ENCODE measurements at regions of chr1 and their contacts with region 1.

Region 1: GRCh38 chr1:28329395-28330153 is 734 bp downstream of the MED18 start:
- DNase-seq: peak in 10 of 14 experiments; percentile 17 to 73 (median 36)
- ATAC-seq: peak; percentile 21
- H3K4me3 ChIP-seq: peak overlapping the region; percentile 67
- H3K4me3 Mint-ChIP-seq: peak overlapping the region; percentile 94
- H3K27ac ChIP-seq: peak overlapping the region; percentile 90 to 93
- H3K27ac Mint-ChIP-seq: peak overlapping the region; percentile 88
- H3K4me1 ChIP-seq: peaks cover 25% of the 10 kb centered on the region
- H3K4me1 Mint-ChIP-seq: peaks cover 35% of the 10 kb centered on the region
- H3K27me3 ChIP-seq: no peaks in the 10 kb centered on the region
- H3K27me3 Mint-ChIP-seq: no peaks in the 10 kb centered on the region
- CTCF ChIP-seq: no peak

Region 2: DNA sequence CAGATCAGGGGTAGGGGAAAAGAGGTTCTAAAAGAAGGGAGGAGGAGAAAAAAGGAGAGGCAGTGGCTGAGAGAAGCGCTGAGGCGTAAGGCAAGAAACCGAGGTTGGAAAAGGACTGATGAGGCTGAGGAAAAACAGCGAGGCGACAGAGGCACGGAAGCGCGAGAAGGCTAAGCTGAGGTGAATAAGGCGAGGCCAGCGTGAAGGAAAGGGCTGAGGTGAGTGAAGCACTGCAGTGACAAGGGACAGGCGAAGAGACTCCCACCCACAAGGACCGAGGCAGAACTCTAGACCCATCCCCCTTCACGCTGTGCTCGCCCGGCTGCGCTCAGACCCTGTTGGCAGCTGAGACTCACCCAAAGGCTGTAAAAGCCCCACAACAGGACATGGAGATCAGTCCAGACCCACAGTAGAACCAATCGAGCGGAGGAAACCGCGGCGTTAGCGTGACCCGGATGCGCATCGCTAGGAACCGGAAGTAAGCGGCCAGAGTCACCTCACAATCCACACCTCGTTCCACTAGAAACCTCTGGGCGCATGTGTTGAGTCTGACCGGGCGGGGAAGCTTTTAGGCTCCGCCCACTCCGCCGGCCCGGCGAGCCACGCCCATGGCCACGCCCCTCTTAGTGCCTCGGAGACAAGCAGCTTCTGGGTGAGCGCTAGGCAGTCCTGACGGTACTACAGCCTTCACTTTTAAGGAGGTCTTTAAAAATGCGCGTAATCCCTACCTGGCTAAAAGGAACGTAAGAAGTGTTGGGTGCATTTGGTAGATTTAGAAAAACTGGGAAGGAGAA is 241.2 kb before region 1 on chr1 and contains the start of gene EYA3:
- CTCF ChIA-PET with region 1: no interaction called
- POLR2A ChIA-PET with region 1: interaction called, 7 read pairs
- intact Hi-C with region 1: loop called in 1 of 2 experiments (anchors 5 kb)
- DNase-seq: peak; percentile 97 to 100 (median 99)
- ATAC-seq: peak; percentile 92
- H3K4me3 ChIP-seq: peak within 1 kb of the TSS; percentile 81
- H3K4me3 Mint-ChIP-seq: peak within 1 kb of the TSS; percentile 97
- H3K27ac ChIP-seq: peak within 1 kb of the TSS; percentile 69 to 86
- H3K27ac Mint-ChIP-seq: peak within 1 kb of the TSS; percentile 79
- H3K4me1 ChIP-seq: peaks cover 22% of the 10 kb centered on the region
- H3K4me1 Mint-ChIP-seq: peaks cover 42% of the 10 kb centered on the region
- H3K27me3 ChIP-seq: no peaks in the 10 kb centered on the region
- H3K27me3 Mint-ChIP-seq: no peaks in the 10 kb centered on the region
- CTCF ChIP-seq: no peak
- total RNA-seq, gene EYA3: 5.7 to 6.4 TPM

Region 3: GRCh38 chr1:28259307-28260167 is 70.0 kb before region 1 on chr1 and contains the start of gene SESN2:
- CTCF ChIA-PET with region 1: interaction called, 3 read pairs
- POLR2A ChIA-PET with region 1: interaction called, 49 read pairs
- intact Hi-C with region 1: loop called in 1 of 2 experiments (anchors 2 kb)
- DNase-seq: peak; percentile 98 to 99 (median 99)
- ATAC-seq: peak; percentile 98
- H3K4me3 ChIP-seq: peak within 1 kb of the TSS; percentile 98
- H3K4me3 Mint-ChIP-seq: peak within 1 kb of the TSS; percentile 91
- H3K27ac ChIP-seq: peak within 1 kb of the TSS; percentile 29 to 54
- H3K27ac Mint-ChIP-seq: peak within 1 kb of the TSS; percentile 76
- H3K4me1 ChIP-seq: peaks cover 72% of the 10 kb centered on the region
- H3K4me1 Mint-ChIP-seq: peaks cover 46% of the 10 kb centered on the region
- H3K27me3 ChIP-seq: no peaks in the 10 kb centered on the region
- H3K27me3 Mint-ChIP-seq: no peaks in the 10 kb centered on the region
- CTCF ChIP-seq: no peak
- total RNA-seq, gene SESN2: 8.8 to 9.6 TPM

Region 4: DNA sequence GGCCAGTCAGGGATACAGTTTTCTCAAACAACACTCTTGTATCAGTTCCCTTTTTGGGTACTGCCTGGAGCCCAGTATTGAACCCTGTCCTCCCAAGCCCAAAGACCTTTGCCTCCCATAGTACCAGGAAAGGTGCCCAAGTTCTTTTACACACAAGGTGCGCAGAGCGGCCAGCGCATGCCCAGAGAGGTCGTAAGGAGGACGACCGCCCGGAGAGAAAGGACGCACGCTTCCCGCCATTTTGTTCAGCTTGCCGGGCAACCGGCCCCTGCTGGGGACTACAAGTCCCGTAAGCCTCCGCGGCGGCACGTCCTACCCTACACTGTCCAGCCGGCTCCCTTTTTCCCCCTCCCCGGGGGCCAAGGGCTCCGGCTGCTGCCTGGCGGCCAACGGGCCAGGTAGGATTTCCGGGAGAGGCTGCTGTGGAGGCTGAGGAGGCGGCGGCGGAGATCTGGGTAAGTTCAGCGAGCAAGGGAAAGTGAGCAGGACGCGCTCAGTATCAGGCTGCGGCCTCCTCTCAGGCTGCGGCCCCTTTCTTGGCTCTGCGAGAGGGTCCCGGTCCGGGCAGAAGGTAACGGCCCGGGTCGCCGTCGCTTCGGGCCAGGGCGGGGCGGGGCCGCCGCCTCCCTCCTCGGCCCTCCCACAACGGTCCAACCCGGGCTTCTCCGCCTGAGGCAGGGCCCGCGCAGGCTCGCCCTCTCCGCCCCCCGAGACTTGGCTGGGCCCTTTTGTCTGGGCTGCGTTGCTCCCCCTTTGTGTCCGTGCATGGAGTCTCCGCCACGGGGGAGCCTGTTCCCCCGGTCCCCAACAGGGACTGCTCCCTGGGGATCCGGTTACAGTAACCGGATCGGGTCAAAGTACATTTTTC is 40.0 kb after region 1 on chr1 and contains the start of gene PHACTR4:
- CTCF ChIA-PET with region 1: no interaction called
- POLR2A ChIA-PET with region 1: interaction called, 24 read pairs
- intact Hi-C with region 1: loop called in 1 of 2 experiments (anchors 2 kb)
- DNase-seq: peak; percentile 53 to 90 (median 68)
- ATAC-seq: peak; percentile 88
- H3K4me3 ChIP-seq: peak within 1 kb of the TSS; percentile 97
- H3K4me3 Mint-ChIP-seq: peak within 1 kb of the TSS; percentile 94
- H3K27ac ChIP-seq: peak within 1 kb of the TSS; percentile 69 to 81
- H3K27ac Mint-ChIP-seq: peak within 1 kb of the TSS; percentile 84
- H3K4me1 ChIP-seq: peaks cover 25% of the 10 kb centered on the region
- H3K4me1 Mint-ChIP-seq: peaks cover 35% of the 10 kb centered on the region
- H3K27me3 ChIP-seq: no peaks in the 10 kb centered on the region
- H3K27me3 Mint-ChIP-seq: no peaks in the 10 kb centered on the region
- CTCF ChIP-seq: no peak
- total RNA-seq, gene PHACTR4: 26.0 to 26.3 TPM

Region 5: GRCh38 chr1:28581536-28582247 is 252.1 kb after region 1 on chr1:
- CTCF ChIA-PET with region 1: no interaction called
- POLR2A ChIA-PET with region 1: interaction called, 26 read pairs
- intact Hi-C with region 1: no loop called
- DNase-seq: peak; percentile 85 to 97 (median 92)
- ATAC-seq: peak; percentile 83
- H3K4me3 ChIP-seq: peak overlapping the region; percentile 93
- H3K4me3 Mint-ChIP-seq: peak overlapping the region; percentile 94
- H3K27ac ChIP-seq: peak overlapping the region; percentile 70 to 83
- H3K27ac Mint-ChIP-seq: peak overlapping the region; percentile 81
- H3K4me1 ChIP-seq: peaks cover 39% of the 10 kb centered on the region
- H3K4me1 Mint-ChIP-seq: peaks cover 48% of the 10 kb centered on the region
- H3K27me3 ChIP-seq: no peaks in the 10 kb centered on the region
- H3K27me3 Mint-ChIP-seq: no peaks in the 10 kb centered on the region
- CTCF ChIP-seq: no peak

Region 6: DNA sequence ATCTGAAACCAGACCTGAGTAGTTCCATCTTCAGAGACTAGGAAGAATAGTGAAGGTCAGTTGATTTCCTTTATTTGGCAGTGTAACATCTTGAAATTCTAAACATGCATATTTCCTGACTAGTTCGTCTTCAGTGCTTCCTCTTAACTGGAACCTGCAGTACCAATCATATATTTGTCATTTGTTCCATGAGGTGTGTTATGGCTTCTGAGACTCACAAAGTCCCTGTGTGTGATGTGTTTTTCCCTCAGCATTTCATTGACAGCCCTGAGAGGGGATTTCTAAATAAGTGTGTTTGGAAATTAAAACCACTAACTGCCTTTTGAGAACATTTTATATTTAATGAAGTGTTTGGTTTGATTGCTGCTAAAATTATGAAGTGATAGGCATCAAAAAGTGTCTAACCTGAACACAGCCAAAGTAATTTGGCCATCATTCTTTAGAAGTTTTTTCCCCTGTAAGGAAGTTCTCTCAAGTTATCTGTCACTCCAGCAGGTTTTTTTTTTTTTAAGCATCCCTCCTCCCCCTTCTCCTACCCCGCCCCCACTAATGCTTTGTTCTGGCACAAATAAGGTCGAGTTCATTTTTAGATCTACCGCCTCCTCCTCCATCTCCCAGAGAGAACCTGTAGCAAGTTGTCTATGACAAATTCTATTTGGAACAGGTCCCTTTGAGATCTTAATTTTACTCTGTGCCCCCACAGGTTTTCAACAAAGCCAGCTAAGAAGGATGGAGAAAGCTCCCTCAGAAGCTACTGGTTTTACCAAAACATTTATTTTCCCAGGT is 732.8 kb after region 1 on chr1:
- CTCF ChIA-PET with region 1: no interaction called
- POLR2A ChIA-PET with region 1: no interaction called
- intact Hi-C with region 1: no loop called
- DNase-seq: no peak
- ATAC-seq: no peak
- H3K4me3 ChIP-seq: no peak overlapping the region
- H3K4me3 Mint-ChIP-seq: no peak overlapping the region
- H3K27ac ChIP-seq: no peak overlapping the region
- H3K27ac Mint-ChIP-seq: peak overlapping the region; percentile 29
- H3K4me1 ChIP-seq: no peaks in the 10 kb centered on the region
- H3K4me1 Mint-ChIP-seq: peaks cover 18% of the 10 kb centered on the region
- H3K27me3 ChIP-seq: no peaks in the 10 kb centered on the region
- H3K27me3 Mint-ChIP-seq: no peaks in the 10 kb centered on the region
- CTCF ChIP-seq: no peak

Measured in CD4-positive, alpha-beta T cell (primary cell).